ENCODE measurements at regions of chr2 and their contacts with region 1.

Region 1: GRCh38 chr2:225282858-225283710 is 116.4 kb upstream of the NYAP2 start:
- DNase-seq: peak in 1 of 2 experiments; percentile 27
- H3K4me3 ChIP-seq: no peak overlapping the region
- H3K4me3 Mint-ChIP-seq: no peak overlapping the region
- H3K27ac Mint-ChIP-seq: no peak overlapping the region
- H3K4me1 ChIP-seq: no peaks in the 10 kb centered on the region
- H3K4me1 Mint-ChIP-seq: no peaks in the 10 kb centered on the region
- H3K27me3 ChIP-seq: no peaks in the 10 kb centered on the region
- H3K27me3 Mint-ChIP-seq: peaks cover 3% of the 10 kb centered on the region
- CTCF ChIP-seq: peak; percentile 58 to 62

Region 2: DNA sequence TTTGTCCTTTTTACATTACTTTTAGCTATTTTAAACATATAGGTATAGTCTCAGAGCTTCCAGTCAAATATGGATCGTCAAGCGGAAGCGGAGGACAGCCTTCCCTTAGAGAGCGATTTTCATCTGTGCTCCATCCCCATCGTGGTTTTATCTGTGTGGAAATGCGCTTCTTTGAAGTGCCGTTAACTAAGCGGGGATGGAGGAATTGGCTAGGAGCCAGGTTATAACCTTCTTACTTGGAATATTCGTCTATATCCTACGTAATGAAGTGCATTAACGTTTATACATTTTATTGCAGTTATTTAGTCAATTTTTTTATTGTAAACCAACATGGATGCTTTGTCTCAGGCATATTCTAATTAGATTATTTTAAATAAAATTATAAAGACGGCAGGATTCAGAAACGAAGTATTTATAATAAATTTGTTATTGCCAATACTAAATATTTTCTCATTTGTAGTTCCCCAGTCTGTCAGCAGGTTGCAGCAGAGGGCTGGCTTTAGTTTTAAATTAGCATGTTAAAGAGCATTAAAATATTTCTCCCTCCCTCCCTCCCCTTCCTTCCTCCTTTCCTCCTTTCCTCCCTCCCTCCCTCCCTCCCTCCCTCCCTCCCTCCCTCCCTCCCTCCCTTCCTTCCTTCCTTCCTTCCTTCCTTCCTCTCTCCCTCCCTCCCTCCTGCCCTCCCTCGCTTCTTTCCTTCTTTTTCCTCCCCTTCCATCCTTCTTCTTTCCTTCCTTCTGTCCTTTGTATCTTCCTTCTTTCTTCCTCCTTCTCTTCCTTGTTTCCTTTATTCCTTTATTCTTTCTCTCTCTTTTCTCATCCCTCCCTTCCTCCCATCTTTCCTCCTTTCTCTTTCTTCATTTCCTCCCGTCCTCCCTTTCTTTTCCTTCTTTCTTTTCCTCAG is 160.2 kb before region 1 on chr2:
- CTCF ChIA-PET with region 1: no interaction called
- POLR2A ChIA-PET with region 1: no interaction called
- intact Hi-C with region 1: loop called (anchors 5 kb)
- DNase-seq: peak in 1 of 2 experiments; percentile 3
- H3K4me3 ChIP-seq: no peak overlapping the region
- H3K4me3 Mint-ChIP-seq: no peak overlapping the region
- H3K27ac Mint-ChIP-seq: no peak overlapping the region
- H3K4me1 ChIP-seq: no peaks in the 10 kb centered on the region
- H3K4me1 Mint-ChIP-seq: no peaks in the 10 kb centered on the region
- H3K27me3 ChIP-seq: no peaks in the 10 kb centered on the region
- H3K27me3 Mint-ChIP-seq: peaks cover 3% of the 10 kb centered on the region
- CTCF ChIP-seq: peak; percentile 19 to 47

Region 3: DNA sequence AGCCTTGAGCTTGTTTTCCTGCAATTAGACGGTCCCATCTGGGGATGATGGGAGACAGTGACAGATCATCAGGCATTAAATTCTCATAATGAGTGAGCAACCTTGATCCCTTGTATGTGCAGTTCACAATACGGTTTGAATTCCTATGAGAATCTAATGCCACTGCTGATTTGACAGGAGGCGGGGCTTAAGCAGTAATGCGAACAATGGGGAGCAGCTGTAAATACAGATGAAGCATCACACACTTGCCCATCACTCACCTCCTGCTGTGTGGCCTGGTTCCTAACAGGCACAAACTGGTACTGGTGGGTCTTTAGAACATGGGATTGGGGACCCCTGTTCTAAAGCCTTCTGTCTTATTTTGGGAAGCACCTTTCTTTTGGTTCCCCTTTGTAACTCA is 98.5 kb after region 1 on chr2:
- CTCF ChIA-PET with region 1: no interaction called
- POLR2A ChIA-PET with region 1: no interaction called
- intact Hi-C with region 1: no loop called
- DNase-seq: no peak
- H3K4me3 ChIP-seq: no peak overlapping the region
- H3K4me3 Mint-ChIP-seq: no peak overlapping the region
- H3K27ac Mint-ChIP-seq: no peak overlapping the region
- H3K4me1 ChIP-seq: no peaks in the 10 kb centered on the region
- H3K4me1 Mint-ChIP-seq: no peaks in the 10 kb centered on the region
- H3K27me3 ChIP-seq: no peaks in the 10 kb centered on the region
- H3K27me3 Mint-ChIP-seq: peaks cover 4% of the 10 kb centered on the region
- CTCF ChIP-seq: no peak

Region 4: DNA sequence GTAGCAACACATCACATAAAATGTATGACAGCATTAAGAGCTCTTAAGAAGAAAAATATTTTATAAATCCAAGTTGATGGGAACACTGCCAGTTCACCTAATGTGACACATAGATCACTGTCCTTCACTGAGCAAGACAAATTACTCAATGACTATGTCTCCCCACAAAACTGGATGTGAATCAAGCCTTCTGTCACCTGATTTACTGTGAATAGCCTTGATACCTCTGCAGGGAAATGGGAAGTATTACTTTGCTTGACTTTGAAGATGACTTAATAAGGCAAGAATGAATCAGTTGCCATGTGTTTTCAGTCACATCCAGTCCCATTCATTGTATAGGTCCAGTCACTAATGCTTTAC is 211.0 kb after region 1 on chr2:
- CTCF ChIA-PET with region 1: no interaction called
- POLR2A ChIA-PET with region 1: no interaction called
- intact Hi-C with region 1: loop called (anchors 1 kb)
- DNase-seq: no peak
- H3K4me3 ChIP-seq: no peak overlapping the region
- H3K4me3 Mint-ChIP-seq: no peak overlapping the region
- H3K27ac Mint-ChIP-seq: no peak overlapping the region
- H3K4me1 ChIP-seq: no peaks in the 10 kb centered on the region
- H3K4me1 Mint-ChIP-seq: no peaks in the 10 kb centered on the region
- H3K27me3 ChIP-seq: no peaks in the 10 kb centered on the region
- H3K27me3 Mint-ChIP-seq: peaks cover 2% of the 10 kb centered on the region
- CTCF ChIP-seq: no peak

Region 5: DNA sequence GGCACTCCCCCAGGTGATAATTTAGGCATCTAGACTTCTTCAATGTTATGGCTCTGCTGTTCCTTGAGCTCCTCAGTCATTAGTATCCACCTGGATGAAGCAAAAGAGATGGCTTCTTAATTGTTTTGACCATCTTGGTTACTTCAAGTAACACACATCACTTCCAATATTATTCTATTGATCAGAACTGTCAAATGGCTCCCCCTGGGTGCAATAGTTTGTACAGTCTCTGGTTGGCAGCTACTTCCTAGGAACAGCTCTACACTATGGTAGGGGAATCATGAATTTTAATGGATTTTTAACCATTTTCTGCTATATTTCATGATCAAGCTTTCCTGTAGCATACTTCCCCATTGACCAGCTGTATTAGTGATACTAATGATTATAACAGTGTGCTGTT is 273.4 kb after region 1 on chr2:
- CTCF ChIA-PET with region 1: interaction called, 3 read pairs
- POLR2A ChIA-PET with region 1: no interaction called
- intact Hi-C with region 1: loop called (anchors 1 kb)
- DNase-seq: no peak
- H3K4me3 ChIP-seq: no peak overlapping the region
- H3K4me3 Mint-ChIP-seq: no peak overlapping the region
- H3K27ac Mint-ChIP-seq: no peak overlapping the region
- H3K4me1 ChIP-seq: no peaks in the 10 kb centered on the region
- H3K4me1 Mint-ChIP-seq: no peaks in the 10 kb centered on the region
- H3K27me3 ChIP-seq: no peaks in the 10 kb centered on the region
- H3K27me3 Mint-ChIP-seq: no peaks in the 10 kb centered on the region
- CTCF ChIP-seq: peak in 1 of 2 experiments; percentile 11

Region 6: GRCh38 chr2:225660262-225661131 is 377.4 kb after region 1 on chr2:
- CTCF ChIA-PET with region 1: interaction called, 11 read pairs
- POLR2A ChIA-PET with region 1: no interaction called
- intact Hi-C with region 1: loop called (anchors 1 kb)
- DNase-seq: peak; percentile 40 to 56
- H3K4me3 ChIP-seq: no peak overlapping the region
- H3K4me3 Mint-ChIP-seq: no peak overlapping the region
- H3K27ac Mint-ChIP-seq: no peak overlapping the region
- H3K4me1 ChIP-seq: no peaks in the 10 kb centered on the region
- H3K4me1 Mint-ChIP-seq: no peaks in the 10 kb centered on the region
- H3K27me3 ChIP-seq: no peaks in the 10 kb centered on the region
- H3K27me3 Mint-ChIP-seq: peaks cover 6% of the 10 kb centered on the region
- CTCF ChIP-seq: peak; percentile 71 to 72

Region 7: GRCh38 chr2:225678792-225679191 is 395.7 kb after region 1 on chr2:
- CTCF ChIA-PET with region 1: no interaction called
- POLR2A ChIA-PET with region 1: no interaction called
- intact Hi-C with region 1: no loop called
- DNase-seq: no peak
- H3K4me3 ChIP-seq: no peak overlapping the region
- H3K4me3 Mint-ChIP-seq: no peak overlapping the region
- H3K27ac Mint-ChIP-seq: no peak overlapping the region
- H3K4me1 ChIP-seq: no peaks in the 10 kb centered on the region
- H3K4me1 Mint-ChIP-seq: no peaks in the 10 kb centered on the region
- H3K27me3 ChIP-seq: no peaks in the 10 kb centered on the region
- H3K27me3 Mint-ChIP-seq: no peaks in the 10 kb centered on the region
- CTCF ChIP-seq: no peak

Measured in Caco-2 (cell line).